Calu3 (cell line): ENCODE measurements at regions of chr19 and their contacts with region 1.

Region 1: DNA sequence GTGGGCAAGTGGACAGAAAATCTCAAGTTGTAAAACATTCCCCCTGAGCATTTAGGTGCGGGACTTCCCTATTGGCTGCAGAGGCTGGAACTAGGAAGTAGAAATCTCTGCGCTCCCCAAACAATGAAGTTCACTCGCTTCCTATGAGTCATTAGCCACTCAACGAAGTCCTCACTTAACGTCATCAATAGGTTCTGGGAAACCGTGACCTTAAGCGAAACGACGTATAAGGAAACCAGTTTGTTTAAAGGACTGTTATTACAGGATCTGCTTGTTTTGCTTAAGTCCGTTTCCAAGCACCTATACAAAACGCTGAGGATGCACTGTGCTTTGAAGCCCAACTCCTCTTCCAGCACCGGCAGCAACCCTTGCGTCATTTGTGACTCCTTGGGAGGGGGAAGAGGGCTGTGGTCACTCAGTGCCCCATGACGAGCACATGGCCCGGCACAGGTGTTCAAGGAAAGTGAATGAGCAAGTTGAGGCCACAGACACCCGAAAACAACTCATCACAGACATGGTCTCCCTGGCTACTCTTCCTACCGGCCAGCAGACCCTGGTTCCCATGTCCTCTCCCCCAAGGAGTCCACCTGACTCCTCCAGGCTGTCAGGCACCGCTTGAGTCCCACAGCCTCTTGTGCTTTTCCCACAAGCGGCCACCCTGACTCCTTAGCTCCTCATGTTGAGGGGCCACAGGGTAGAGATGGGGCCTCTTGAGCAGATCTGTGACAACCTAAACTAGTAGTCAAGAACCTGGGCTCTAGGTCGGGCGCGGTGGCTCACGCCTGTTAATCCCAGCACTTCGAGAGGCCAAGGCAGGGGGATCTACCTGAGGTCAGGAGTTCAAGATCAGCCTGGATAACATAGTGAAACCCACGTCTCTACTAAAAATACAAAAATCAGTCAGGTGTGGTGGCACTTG is 4.8 kb downstream of the RPS16 start:
- DNase-seq: peak; percentile 87
- H3K4me3 Mint-ChIP-seq: peak overlapping the region; percentile 43
- H3K27ac Mint-ChIP-seq: peak overlapping the region; percentile 96
- H3K4me1 Mint-ChIP-seq: peaks cover 24% of the 10 kb centered on the region
- H3K27me3 Mint-ChIP-seq: no peaks in the 10 kb centered on the region
- CTCF ChIP-seq: no peak

Region 2: GRCh38 chr19:39390755-39391592 is 40.0 kb before region 1 on chr19 and contains the starts of genes MED29 and PAF1:
- CTCF ChIA-PET with region 1: interaction called, 4 read pairs
- intact Hi-C with region 1: loop called (anchors 1 kb)
- DNase-seq: peak; percentile 98
- H3K4me3 Mint-ChIP-seq: peak within 1 kb of the TSS; percentile 96
- H3K27ac Mint-ChIP-seq: peak within 1 kb of the TSS; percentile 95
- H3K4me1 Mint-ChIP-seq: peaks cover 21% of the 10 kb centered on the region
- H3K27me3 Mint-ChIP-seq: no peaks in the 10 kb centered on the region
- CTCF ChIP-seq: no peak
- total RNA-seq, gene MED29: 56.8 and 66.6 TPM in 2 replicates
- total RNA-seq, gene PAF1: 64.3 and 72.7 TPM in 2 replicates

Region 3: GRCh38 chr19:39412100-39412866 is 18.7 kb before region 1 on chr19 and contains the start of gene PLEKHG2:
- CTCF ChIA-PET with region 1: interaction called, 4 read pairs
- intact Hi-C with region 1: loop called (anchors 2 kb)
- DNase-seq: peak; percentile 99
- H3K4me3 Mint-ChIP-seq: peak within 1 kb of the TSS; percentile 77
- H3K27ac Mint-ChIP-seq: peak within 1 kb of the TSS; percentile 94
- H3K4me1 Mint-ChIP-seq: peaks cover 45% of the 10 kb centered on the region
- H3K27me3 Mint-ChIP-seq: no peaks in the 10 kb centered on the region
- CTCF ChIP-seq: peak; percentile 93
- total RNA-seq, gene PLEKHG2: 64.1 and 65.3 TPM in 2 replicates